Aorta (tissue), 5 donors: ENCODE measurements at regions of chr9 and their contacts with region 1.

Region 1: DNA sequence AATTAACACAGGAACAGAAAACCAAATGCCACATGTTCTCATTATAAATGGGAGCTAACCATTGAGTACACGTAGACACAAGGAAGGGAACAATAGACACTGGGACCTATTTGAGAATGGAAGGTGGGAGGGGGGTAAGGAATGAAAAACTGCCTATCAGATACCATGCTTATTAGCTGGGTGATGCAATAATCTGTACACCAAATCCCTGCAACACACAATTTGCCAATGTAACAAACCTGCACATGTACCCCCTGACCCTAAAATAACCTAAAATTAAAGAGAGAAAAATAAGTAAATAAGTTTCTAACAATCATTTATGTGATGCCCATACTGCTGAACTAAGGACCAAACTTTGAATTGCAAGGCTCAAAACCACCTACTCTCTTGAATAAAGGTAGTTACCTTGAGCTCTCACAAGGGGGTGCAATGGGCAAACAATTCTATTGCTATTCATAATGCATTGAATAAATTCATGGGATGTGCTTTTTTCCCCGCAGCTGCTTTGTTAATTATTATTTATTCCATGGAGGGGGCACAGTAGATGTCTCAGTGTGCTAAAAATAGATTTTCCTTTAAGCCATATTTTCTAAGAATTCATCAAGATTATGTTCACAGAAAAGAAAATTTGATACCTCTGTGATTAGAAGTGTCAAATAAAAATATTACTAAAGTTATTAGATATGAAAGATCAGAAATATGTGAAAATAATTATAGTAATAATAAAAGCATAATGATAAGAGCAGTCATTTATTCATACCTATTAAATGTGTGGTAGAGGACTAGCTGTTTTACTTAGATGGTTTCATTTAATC is 76.2 kb upstream of the PTPN3 start:
- DNase-seq: no peak
- ATAC-seq: peak; percentile 70
- H3K4me3 ChIP-seq: no peak overlapping the region
- H3K27ac ChIP-seq: no peak overlapping the region
- H3K4me1 ChIP-seq: no peaks in the 10 kb centered on the region
- H3K27me3 ChIP-seq: no peaks in the 10 kb centered on the region

Region 2: DNA sequence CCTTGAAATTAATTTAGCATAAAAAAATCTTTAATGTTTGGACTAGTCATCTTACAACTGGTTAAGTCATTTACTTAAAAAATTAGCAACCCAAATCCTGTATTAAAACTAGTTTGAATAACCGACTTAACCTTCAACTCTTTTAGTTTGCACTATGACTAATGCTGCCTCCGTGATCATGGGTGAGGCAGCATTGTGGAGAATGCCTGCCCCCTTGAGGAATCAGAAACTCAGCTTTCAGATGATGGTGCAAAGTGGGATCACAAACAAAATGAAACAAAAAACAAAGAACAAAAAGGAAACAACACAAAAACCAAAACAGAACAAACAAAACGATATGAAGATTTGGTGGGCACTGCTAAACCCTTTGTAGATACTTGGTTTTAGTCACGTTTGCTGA is 78.7 kb after region 1 on chr9:
- intact Hi-C with region 1: loop called (anchors 1 to 5 kb)
- DNase-seq: no peak
- ATAC-seq: no peak
- H3K4me3 ChIP-seq: no peak overlapping the region
- H3K27ac ChIP-seq: no peak overlapping the region
- H3K4me1 ChIP-seq: no peaks in the 10 kb centered on the region
- H3K27me3 ChIP-seq: no peaks in the 10 kb centered on the region

Region 3: DNA sequence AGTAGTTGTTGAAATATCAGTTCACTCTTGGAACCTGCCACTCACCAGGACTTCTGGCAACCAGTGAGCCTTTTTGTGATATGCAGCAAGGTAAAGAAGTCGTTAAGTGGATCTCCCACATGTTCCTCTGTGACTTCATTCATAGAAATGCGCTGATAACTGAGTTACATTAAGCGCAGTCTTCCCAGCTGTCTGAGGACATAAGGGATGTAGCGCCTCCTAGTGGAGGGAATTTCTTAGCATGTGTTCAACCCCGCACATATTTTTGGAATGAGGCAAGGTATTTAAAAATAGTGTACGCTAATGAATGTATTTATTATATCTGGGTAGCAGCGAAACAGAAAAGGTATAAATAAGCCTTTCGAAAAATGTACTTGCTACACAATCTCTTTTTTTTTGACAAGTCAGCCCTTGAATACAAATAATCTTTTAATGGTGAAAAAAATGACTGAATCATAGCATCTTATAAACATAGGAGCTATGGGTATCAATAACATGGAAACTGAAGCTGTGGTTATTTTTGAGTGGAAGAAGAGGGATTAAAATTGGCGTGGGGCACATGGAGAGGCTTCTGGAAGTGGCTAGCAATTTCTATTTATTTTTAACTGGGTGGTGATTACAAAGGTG is 243.7 kb after region 1 on chr9:
- intact Hi-C with region 1: loop called (anchors 5 kb)
- DNase-seq: peak in 1 of 2 donors; percentile 55
- ATAC-seq: peak; percentile 88
- H3K4me3 ChIP-seq: no peak overlapping the region
- H3K27ac ChIP-seq: peak overlapping the region in 1 of 2 donors; percentile 89
- H3K4me1 ChIP-seq: peaks cover 0 to 7% of the 10 kb centered on the region in 2 donors
- H3K27me3 ChIP-seq: no peaks in the 10 kb centered on the region

Region 4: GRCh38 chr9:109894921-109895758 is 320.9 kb after region 1 on chr9:
- intact Hi-C with region 1: loop called in 1 of 2 experiments (anchors 10 kb)
- DNase-seq: peak in 1 of 2 donors; percentile 50
- ATAC-seq: peak; percentile 52
- H3K4me3 ChIP-seq: no peak overlapping the region
- H3K27ac ChIP-seq: peak overlapping the region in 1 of 2 donors; percentile 38
- H3K4me1 ChIP-seq: peaks cover 2 to 4% of the 10 kb centered on the region in 2 donors
- H3K27me3 ChIP-seq: no peaks in the 10 kb centered on the region

Region 5: GRCh38 chr9:110161940-110162339 is 587.7 kb after region 1 on chr9:
- intact Hi-C with region 1: loop called in 1 of 2 experiments (anchors 5 kb)
- DNase-seq: no peak
- ATAC-seq: no peak
- H3K4me3 ChIP-seq: no peak overlapping the region
- H3K27ac ChIP-seq: no peak overlapping the region
- H3K4me1 ChIP-seq: peaks cover 7 to 9% of the 10 kb centered on the region in 2 donors
- H3K27me3 ChIP-seq: no peaks in the 10 kb centered on the region

Region 6: GRCh38 chr9:110382741-110383140 is 808.5 kb after region 1 on chr9:
- intact Hi-C with region 1: no loop called
- DNase-seq: no peak
- ATAC-seq: no peak
- H3K4me3 ChIP-seq: no peak overlapping the region
- H3K27ac ChIP-seq: no peak overlapping the region
- H3K4me1 ChIP-seq: no peaks in the 10 kb centered on the region
- H3K27me3 ChIP-seq: no peaks in the 10 kb centered on the region